BJ (cell line): ENCODE measurements at regions of chr3 and their contacts with region 1.

Region 1: GRCh38 chr3:188584162-188584529 is 430.2 kb downstream of the LPP start:
- DNase-seq: no peak
- H3K4me3 ChIP-seq: no peak overlapping the region
- H3K27me3 ChIP-seq: no peaks in the 10 kb centered on the region
- CTCF ChIP-seq: no peak

Region 2: GRCh38 chr3:188562144-188562543 is 22.0 kb before region 1 on chr3:
- CTCF ChIA-PET with region 1: no interaction called
- POLR2A ChIA-PET with region 1: interaction called, 11 read pairs
- DNase-seq: no peak
- H3K4me3 ChIP-seq: no peak overlapping the region
- H3K27me3 ChIP-seq: no peaks in the 10 kb centered on the region
- CTCF ChIP-seq: no peak